Mammary epithelial cell (primary cell): ENCODE measurements at regions of chr1 and their contacts with region 1.

Region 1: DNA sequence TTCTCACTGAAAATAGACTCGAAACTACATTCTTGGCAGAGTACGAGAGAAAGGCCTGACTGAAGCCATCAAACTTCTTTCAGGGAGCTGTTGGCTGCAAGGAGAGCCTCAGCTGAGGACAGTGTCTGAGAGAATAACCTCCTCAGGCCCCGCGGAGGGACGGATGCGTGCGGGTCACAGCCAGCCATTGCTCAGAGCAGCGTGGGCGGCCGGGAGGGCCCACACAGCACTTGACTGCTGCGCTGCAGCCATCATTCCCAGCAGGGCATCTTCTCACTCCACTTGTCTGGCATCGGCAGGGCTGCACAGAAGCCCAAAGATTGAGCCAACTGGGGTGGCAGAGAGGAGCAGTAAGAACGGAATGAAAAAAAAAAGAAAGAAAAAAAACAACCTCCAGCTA is 113.5 kb downstream of the XCL2 start:
- DNase-seq: no peak
- H3K4me3 ChIP-seq: no peak overlapping the region
- H3K27ac ChIP-seq: no peak overlapping the region
- H3K4me1 ChIP-seq: no peaks in the 10 kb centered on the region
- H3K27me3 ChIP-seq: no peaks in the 10 kb centered on the region
- CTCF ChIP-seq: no peak

Region 2: DNA sequence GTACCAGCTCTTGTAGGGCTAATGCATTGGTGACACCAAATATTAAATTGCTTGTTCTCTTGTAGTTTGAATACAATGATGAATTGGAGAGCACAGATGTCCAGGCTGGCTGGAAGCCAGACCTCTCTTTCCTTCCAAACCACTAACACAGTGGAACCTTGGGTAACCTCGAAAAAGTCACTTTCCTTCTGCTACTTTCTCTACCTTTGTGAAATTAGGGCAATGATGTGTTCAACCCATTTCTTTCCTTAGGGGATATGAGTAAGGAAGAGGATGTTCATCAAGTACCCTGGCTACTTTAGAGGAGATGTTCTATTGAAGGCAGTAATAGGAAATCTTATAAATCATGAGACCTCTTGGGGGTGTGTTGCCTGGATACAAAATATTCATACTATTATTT is 57.8 kb after region 1 on chr1:
- CTCF ChIA-PET with region 1: no interaction called
- dilution Hi-C with region 1: loop called (anchors 5 kb)
- in situ Hi-C with region 1: no loop called
- intact Hi-C with region 1: no loop called
- DNase-seq: peak; percentile 89
- H3K4me3 ChIP-seq: no peak overlapping the region
- H3K27ac ChIP-seq: peak overlapping the region; percentile 81
- H3K4me1 ChIP-seq: peaks cover 36% of the 10 kb centered on the region
- H3K27me3 ChIP-seq: no peaks in the 10 kb centered on the region
- CTCF ChIP-seq: no peak